Activated naive CD4-positive, alpha-beta T cell treated with anti-CD3 and anti-CD28 coated beads for 36 hours (primary cell): ENCODE measurements at regions of chr1 and their contacts with region 1.

Region 1: GRCh38 chr1:183180634-183181056 is 5.4 kb upstream of the LAMC2 start:
- DNase-seq: peak; percentile 67
- H3K4me3 Mint-ChIP-seq: no peak overlapping the region
- H3K27ac Mint-ChIP-seq: no peak overlapping the region
- H3K4me1 Mint-ChIP-seq: peaks cover 11% of the 10 kb centered on the region
- H3K27me3 Mint-ChIP-seq: peaks cover 9% of the 10 kb centered on the region

Region 2: DNA sequence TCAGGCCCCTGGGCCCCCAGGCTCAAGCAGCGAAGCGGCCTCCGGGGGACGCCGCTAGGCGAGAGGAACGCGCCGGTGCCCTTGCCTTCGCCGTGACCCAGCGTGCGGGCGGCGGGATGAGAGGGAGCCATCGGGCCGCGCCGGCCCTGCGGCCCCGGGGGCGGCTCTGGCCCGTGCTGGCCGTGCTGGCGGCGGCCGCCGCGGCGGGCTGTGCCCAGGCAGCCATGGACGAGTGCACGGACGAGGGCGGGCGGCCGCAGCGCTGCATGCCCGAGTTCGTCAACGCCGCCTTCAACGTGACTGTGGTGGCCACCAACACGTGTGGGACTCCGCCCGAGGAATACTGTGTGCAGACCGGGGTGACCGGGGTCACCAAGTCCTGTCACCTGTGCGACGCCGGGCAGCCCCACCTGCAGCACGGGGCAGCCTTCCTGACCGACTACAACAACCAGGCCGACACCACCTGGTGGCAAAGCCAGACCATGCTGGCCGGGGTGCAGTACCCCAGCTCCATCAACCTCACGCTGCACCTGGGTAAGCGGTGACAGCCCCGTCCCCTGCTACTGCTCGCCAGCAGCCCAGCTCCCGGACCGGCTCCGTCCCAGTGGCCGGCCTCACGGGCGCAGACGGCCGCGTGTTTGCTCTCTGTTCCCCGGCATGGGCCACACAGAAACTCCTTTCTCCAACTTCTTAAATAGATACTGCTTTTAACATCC is 156.9 kb before region 1 on chr1:
- CTCF ChIA-PET with region 1: no interaction called
- intact Hi-C with region 1: loop called (anchors 2 kb)
- DNase-seq: peak; percentile 60
- H3K4me3 Mint-ChIP-seq: peak overlapping the region; percentile 70
- H3K27ac Mint-ChIP-seq: no peak overlapping the region
- H3K4me1 Mint-ChIP-seq: peaks cover 11% of the 10 kb centered on the region
- H3K27me3 Mint-ChIP-seq: peaks cover 68% of the 10 kb centered on the region

Region 3: DNA sequence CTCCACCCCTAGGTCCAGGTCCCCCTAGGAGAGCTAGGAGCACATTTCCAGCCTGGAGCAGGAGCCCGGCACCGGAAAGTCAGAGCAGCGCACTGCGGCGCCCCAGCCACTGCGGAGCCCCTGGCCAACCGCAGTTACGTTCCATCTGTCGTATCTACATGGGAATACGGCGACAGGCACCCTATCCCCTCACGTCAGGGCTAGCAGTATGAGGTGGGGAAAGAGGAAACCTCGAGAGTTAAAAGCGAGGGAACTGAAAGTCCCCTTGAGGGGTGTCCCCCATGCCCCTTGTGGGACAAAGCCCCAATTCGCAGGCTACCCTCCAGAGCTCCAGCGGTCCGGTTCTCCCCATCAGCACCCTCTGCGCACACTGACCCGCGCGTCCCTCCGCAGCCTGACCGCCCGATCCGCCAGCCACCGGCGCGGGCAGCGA is 855.9 kb after region 1 on chr1:
- CTCF ChIA-PET with region 1: no interaction called
- intact Hi-C with region 1: loop called (anchors 5 kb)
- DNase-seq: peak; percentile 23
- H3K4me3 Mint-ChIP-seq: peak overlapping the region; percentile 58
- H3K27ac Mint-ChIP-seq: no peak overlapping the region
- H3K4me1 Mint-ChIP-seq: peaks cover 15% of the 10 kb centered on the region
- H3K27me3 Mint-ChIP-seq: peaks cover 68% of the 10 kb centered on the region